IMR-90 (cell line): ENCODE measurements at regions of chr4 and their contacts with region 1.

Region 1: GRCh38 chr4:80307774-80308465 is 27.6 kb upstream of the CFAP299 start:
- DNase-seq: peak; percentile 79
- ATAC-seq: peak; percentile 53
- H3K4me3 ChIP-seq: peak overlapping the region; percentile 11; the same call in 1 of the 2 replicates
- H3K27ac ChIP-seq: peak overlapping the region; percentile 78
- H3K4me1 ChIP-seq: peaks cover 14% of the 10 kb centered on the region
- H3K27me3 ChIP-seq: no peaks in the 10 kb centered on the region
- CTCF ChIP-seq: no peak
- POLR2A ChIP-seq: no peak
- RAD21 ChIP-seq: no peak

Region 2: DNA sequence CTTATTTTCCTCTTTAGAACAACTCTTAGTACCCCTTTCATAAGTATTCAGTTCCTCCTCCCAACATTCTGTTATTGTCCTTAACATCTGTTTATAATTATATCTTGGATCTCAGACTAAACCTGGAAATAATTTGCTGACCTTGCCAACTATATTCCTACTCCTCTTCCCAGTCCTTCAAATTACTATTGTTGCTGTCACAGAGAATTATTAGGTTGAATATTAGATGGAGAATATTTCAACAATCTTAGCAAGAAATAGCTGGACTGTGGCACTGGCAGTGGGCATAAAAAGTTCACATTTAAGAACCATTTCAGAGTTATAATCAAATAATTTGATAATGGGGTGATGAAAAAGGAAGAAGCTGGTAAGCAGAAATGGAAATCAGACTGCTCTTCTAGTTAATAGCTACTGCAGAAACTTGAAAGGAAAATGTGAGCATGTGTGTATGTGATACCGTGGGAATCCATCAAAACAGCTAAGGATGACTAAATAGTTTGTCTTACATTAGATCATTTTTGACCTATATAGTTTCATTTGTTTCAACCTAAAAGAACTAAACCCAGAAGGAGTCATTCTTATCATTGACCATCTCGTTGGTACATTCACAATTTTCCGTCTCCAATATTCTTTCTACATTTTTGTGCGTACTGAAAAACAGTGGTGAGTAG is 153.9 kb before region 1 on chr4:
- CTCF ChIA-PET with region 1: no interaction called
- POLR2A ChIA-PET with region 1: no interaction called
- dilution Hi-C with region 1: no loop called
- in situ Hi-C with region 1: no loop called
- intact Hi-C with region 1: no loop called
- DNase-seq: peak; percentile 71
- ATAC-seq: peak; percentile 27; the same call in 1 of the 2 replicates
- H3K4me3 ChIP-seq: no peak overlapping the region
- H3K27ac ChIP-seq: no peak overlapping the region
- H3K4me1 ChIP-seq: no peaks in the 10 kb centered on the region
- H3K27me3 ChIP-seq: no peaks in the 10 kb centered on the region
- CTCF ChIP-seq: no peak
- POLR2A ChIP-seq: no peak
- RAD21 ChIP-seq: no peak

Region 3: DNA sequence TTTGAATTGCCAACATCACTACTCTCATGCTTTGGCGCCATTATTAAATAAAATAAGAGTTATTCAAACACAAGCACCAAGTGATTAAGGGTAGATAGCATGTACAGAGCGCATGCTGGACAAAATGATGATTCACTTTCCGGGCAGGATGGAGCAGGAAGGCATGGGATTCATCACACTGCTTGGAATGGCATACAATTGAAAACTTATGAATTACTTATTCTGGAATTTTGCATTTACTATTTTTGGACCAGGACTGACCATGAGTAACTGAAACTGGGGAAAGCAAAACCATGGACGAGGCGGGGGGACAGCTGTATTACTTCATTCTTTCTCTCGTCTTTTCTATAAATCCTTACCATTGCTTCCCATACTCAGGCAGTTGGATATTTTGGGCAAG is 69.9 kb before region 1 on chr4:
- CTCF ChIA-PET with region 1: no interaction called
- POLR2A ChIA-PET with region 1: no interaction called
- dilution Hi-C with region 1: no loop called
- in situ Hi-C with region 1: no loop called
- intact Hi-C with region 1: loop called (anchors 5 kb)
- DNase-seq: peak; percentile 96
- ATAC-seq: peak; percentile 83
- H3K4me3 ChIP-seq: peak overlapping the region; percentile 23; the same call in 1 of the 2 replicates
- H3K27ac ChIP-seq: peak overlapping the region; percentile 25; the same call in 1 of the 2 replicates
- H3K4me1 ChIP-seq: peaks cover 26% of the 10 kb centered on the region
- H3K27me3 ChIP-seq: no peaks in the 10 kb centered on the region
- CTCF ChIP-seq: no peak
- POLR2A ChIP-seq: no peak
- RAD21 ChIP-seq: no peak